ENCODE measurements at regions of chr9 and their contacts with region 1.

Region 1: DNA sequence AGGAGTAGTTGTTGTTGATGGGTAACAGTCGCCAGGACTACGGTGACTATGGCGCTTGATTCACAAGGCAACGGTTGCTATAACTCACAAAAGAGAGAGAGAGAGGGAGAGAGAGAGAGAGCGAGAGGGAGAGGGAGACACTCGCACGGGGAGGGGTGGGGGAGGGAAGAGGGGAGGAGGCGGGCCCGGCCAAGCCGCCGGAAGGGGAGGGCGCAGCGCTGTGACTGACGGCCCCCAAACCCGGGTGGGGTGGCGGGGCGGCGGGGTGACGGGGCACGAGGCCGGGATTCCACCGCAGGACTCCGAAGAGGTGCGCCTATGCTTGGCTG is at the start of gene RFX3:
- DNase-seq: peak in 8 of 9 donors; percentile 87 to 97 (median 92)
- ATAC-seq: peak; percentile 81
- H3K4me3 ChIP-seq: peak within 1 kb of the TSS; percentile 97
- H3K4me3 Mint-ChIP-seq: peak within 1 kb of the TSS; percentile 90 to 99 (median 94)
- H3K27ac ChIP-seq: peak within 1 kb of the TSS; percentile 100
- H3K27ac Mint-ChIP-seq: peak within 1 kb of the TSS; percentile 95 to 100 (median 99)
- H3K4me1 ChIP-seq: peaks cover 28 to 44% of the 10 kb centered on the region in 2 donors
- H3K4me1 Mint-ChIP-seq: peaks cover 32 to 74% (median 67%) of the 10 kb centered on the region in 7 donors
- H3K27me3 ChIP-seq: no peaks in the 10 kb centered on the region
- H3K27me3 Mint-ChIP-seq: peaks cover 0 to 5% (median 0%) of the 10 kb centered on the region in 5 donors
- total RNA-seq, gene RFX3: 12.8 to 31.7 (median 28.4) TPM

Region 2: GRCh38 chr9:2014696-2015580 is 1510.9 kb before region 1 on chr9 and contains the start of gene SMARCA2:
- CTCF ChIA-PET with region 1: no interaction called
- POLR2A ChIA-PET with region 1: interaction called, 4 read pairs
- intact Hi-C with region 1: loop called (anchors 1 to 2 kb)
- DNase-seq: peak; percentile 96 to 98 (median 97)
- ATAC-seq: peak; percentile 90
- H3K4me3 ChIP-seq: peak within 1 kb of the TSS; percentile 98
- H3K4me3 Mint-ChIP-seq: peak within 1 kb of the TSS; percentile 93 to 100 (median 98)
- H3K27ac ChIP-seq: peak within 1 kb of the TSS; percentile 92
- H3K27ac Mint-ChIP-seq: peak within 1 kb of the TSS; percentile 97 to 100 (median 99)
- H3K4me1 ChIP-seq: peaks cover 16 to 18% of the 10 kb centered on the region in 2 donors
- H3K4me1 Mint-ChIP-seq: peaks cover 21 to 60% (median 32%) of the 10 kb centered on the region in 7 donors
- H3K27me3 ChIP-seq: no peaks in the 10 kb centered on the region
- H3K27me3 Mint-ChIP-seq: peaks cover 0 to 24% (median 0%) of the 10 kb centered on the region in 5 donors
- total RNA-seq, gene SMARCA2: 233 to 294 (median 258) TPM

Region 3: DNA sequence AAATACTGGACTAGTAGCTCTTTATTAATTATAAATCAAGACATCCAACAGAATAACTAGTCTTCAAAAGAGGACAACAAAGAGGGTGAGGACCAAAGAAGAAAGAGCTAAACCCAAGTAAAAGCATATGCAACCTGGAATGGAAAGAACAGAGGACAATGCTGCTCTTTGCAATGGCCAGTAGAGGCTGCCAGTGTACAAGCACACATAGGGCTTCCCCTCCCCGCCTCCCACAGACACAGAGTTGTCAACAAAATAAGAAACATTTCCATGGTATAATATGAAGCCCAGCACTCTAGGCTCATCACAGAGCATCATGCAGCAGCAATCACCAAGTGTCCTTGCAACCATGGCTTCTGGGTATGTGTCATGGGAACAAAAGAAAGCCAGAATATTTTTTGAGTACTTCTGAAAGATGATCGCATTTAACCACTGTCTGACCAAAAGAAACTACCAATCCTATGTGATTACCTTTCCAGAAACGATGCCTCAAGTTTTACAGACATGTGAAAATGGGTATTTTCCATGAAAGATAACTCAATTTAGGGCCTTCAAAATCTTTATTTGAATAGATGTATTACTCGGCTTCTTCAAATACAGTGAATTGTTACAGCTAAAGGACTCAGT is 58.1 kb before region 1 on chr9:
- CTCF ChIA-PET with region 1: interaction called, 3 read pairs
- POLR2A ChIA-PET with region 1: interaction called, 17 read pairs
- intact Hi-C with region 1: loop called (anchors 1 kb)
- DNase-seq: peak; percentile 13 to 72 (median 53)
- ATAC-seq: peak; percentile 98
- H3K4me3 ChIP-seq: no peak overlapping the region
- H3K4me3 Mint-ChIP-seq: peak overlapping the region in 1 of 10 donors; percentile 39
- H3K27ac ChIP-seq: no peak overlapping the region
- H3K27ac Mint-ChIP-seq: peak overlapping the region in 3 of 9 donors; percentile 40 to 65 (median 53)
- H3K4me1 ChIP-seq: peaks cover 3 to 4% of the 10 kb centered on the region in 2 donors
- H3K4me1 Mint-ChIP-seq: peaks cover 3 to 25% (median 4%) of the 10 kb centered on the region in 7 donors
- H3K27me3 ChIP-seq: no peaks in the 10 kb centered on the region
- H3K27me3 Mint-ChIP-seq: no peaks in the 10 kb centered on the region

Region 4: DNA sequence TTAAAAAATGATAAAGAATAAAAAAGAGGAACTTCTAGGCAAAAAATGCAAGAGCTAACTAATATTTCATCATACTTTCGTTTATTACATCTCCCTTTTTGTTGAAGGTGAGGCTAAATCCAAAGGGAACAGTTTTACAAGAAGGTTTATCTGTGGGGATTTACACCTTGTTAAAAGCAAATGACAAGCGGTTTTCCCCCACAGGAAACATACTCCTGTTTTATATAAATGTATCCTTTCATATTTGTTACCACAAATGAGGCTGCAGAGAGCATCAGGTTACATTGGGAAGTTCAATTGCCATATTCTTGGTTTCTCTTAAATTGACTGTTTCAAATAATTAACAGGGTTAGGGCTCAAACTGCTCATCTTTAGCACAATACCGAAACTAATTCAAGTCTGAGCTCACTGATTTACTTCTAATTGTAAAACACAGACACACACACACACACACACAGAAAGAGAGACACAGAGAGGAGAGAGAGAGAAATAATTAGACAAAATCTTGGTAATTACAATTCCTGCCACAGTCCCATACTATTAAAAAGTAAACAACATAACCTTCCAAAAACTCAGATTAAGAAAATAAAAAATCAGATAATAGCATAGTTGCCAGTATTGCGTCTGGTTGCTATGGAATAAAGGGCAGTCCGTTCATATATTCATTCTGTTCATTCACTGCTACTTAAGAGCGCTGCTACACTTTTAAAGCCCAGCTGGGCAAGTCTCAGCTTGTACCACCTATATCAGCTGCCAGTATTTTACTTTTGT is 17.1 kb before region 1 on chr9:
- CTCF ChIA-PET with region 1: no interaction called
- POLR2A ChIA-PET with region 1: interaction called, 9 read pairs
- intact Hi-C with region 1: loop called (anchors 1 to 2 kb)
- DNase-seq: no peak
- ATAC-seq: no peak
- H3K4me3 ChIP-seq: no peak overlapping the region
- H3K4me3 Mint-ChIP-seq: peak overlapping the region in 8 of 10 donors; percentile 6 to 66 (median 38)
- H3K27ac ChIP-seq: no peak overlapping the region
- H3K27ac Mint-ChIP-seq: peak overlapping the region in 5 of 9 donors; percentile 24 to 83 (median 76)
- H3K4me1 ChIP-seq: peaks cover 0 to 12% of the 10 kb centered on the region in 2 donors
- H3K4me1 Mint-ChIP-seq: peaks cover 23 to 62% (median 41%) of the 10 kb centered on the region in 7 donors
- H3K27me3 ChIP-seq: no peaks in the 10 kb centered on the region
- H3K27me3 Mint-ChIP-seq: no peaks in the 10 kb centered on the region

Region 5: DNA sequence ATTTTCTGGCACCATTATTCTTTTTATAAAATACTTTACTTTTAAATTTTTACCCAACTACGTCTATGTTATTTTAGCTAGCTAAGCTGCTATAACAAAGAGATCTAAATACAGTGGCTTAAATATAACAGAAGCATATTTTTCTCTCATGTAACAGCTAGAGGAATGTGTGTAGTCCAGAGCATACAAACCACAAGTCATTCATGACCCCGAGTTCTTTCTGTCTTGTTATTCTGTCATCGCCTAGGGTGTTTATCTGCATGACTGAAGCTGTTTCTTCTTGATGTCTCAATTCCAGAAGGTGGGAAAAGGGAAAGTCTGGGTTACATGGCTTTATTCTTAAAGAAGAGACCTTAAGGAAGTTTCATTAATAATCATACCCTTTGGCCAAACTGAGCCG is 136.9 kb after region 1 on chr9:
- CTCF ChIA-PET with region 1: no interaction called
- POLR2A ChIA-PET with region 1: no interaction called
- intact Hi-C with region 1: no loop called
- DNase-seq: no peak
- ATAC-seq: no peak
- H3K4me3 ChIP-seq: no peak overlapping the region
- H3K4me3 Mint-ChIP-seq: no peak overlapping the region
- H3K27ac ChIP-seq: no peak overlapping the region
- H3K27ac Mint-ChIP-seq: no peak overlapping the region
- H3K4me1 ChIP-seq: no peaks in the 10 kb centered on the region
- H3K4me1 Mint-ChIP-seq: no peaks in the 10 kb centered on the region
- H3K27me3 ChIP-seq: no peaks in the 10 kb centered on the region
- H3K27me3 Mint-ChIP-seq: peaks cover 0 to 3% (median 0%) of the 10 kb centered on the region in 5 donors

Region 6: DNA sequence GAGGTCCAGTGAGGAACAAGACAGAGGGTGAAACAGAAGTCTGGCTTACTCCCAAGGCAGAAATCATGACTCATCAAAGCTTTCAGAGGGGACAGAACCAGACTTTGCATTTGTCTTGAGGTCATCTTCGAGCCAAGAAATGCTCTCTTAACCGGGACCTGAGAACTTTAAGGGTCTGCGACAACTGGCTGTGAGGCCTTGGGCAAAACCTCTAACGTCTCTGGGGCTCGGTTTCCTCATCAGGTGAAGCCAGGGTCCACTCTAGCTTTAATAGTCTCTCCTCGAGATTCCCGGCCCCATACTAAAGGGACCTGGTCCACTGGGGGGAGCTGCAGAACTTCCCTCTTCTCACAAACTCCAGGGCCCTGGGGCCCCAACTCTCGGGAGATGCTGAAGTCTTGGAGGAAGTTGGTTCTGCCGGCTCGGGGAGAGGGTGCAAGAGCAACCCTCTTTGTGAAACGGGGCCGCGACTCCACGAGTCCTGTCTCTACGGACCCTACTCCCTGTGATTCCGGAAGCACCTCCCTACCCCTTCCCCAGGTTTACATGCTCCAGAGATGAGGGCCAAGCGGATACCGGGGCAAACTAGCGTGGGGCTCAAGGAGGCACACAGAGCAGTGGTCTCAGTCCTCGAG is 771.5 kb after region 1 on chr9:
- CTCF ChIA-PET with region 1: interaction called, 5 read pairs
- POLR2A ChIA-PET with region 1: interaction called, 17 read pairs
- intact Hi-C with region 1: loop called (anchors 1 to 5 kb)
- DNase-seq: peak; percentile 12 to 47 (median 29)
- ATAC-seq: peak; percentile 55
- H3K4me3 ChIP-seq: peak overlapping the region; percentile 74
- H3K4me3 Mint-ChIP-seq: peak overlapping the region; percentile 93 to 98 (median 96)
- H3K27ac ChIP-seq: peak overlapping the region; percentile 68
- H3K27ac Mint-ChIP-seq: peak overlapping the region; percentile 80 to 97 (median 88)
- H3K4me1 ChIP-seq: peaks cover 0 to 4% of the 10 kb centered on the region in 2 donors
- H3K4me1 Mint-ChIP-seq: peaks cover 15 to 34% (median 21%) of the 10 kb centered on the region in 7 donors
- H3K27me3 ChIP-seq: no peaks in the 10 kb centered on the region
- H3K27me3 Mint-ChIP-seq: peaks cover 0 to 67% (median 28%) of the 10 kb centered on the region in 5 donors

Region 7: DNA sequence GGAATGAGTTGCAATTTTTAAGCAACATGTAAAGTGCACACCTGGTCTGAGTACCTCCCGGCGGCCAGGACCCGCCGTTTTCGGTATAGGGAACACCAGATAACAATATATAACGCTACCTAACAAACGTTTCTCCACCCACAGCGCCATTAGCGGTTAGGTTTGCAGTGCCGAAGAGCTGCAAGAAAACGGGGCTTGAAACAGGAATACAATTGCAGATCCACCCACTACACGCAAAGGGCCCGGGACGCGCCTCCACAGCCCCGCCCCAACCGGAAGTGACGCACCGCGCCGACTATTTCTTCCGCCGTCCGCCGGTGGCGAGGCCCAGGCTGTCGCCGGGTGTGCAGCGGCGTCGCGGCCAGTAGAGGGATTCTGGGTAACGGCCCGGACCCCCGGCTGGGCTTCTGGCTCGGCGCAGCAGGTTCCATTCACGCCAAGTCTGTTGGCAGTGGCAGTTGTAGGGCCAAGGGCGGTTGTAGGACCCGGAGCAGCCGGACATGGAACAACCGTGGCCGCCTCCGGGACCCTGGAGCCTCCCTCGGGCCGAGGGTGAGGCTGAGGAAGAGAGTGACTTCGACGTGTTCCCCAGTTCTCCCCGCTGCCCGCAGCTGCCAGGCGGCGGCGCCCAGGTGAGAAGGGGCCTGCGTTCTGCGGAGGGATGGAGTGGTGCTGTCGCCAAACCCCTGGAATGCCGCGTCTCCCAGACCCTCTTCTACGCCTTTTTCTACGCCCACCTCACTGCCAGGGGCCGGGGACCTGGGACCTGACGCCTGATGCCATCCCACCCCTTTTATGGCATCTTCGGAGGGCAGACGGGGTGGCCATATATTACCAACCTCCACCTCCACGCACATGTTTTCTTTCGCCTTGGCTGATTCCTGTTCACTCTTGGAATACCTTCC is 1153.7 kb after region 1 on chr9 and contains the start of gene CDC37L1:
- CTCF ChIA-PET with region 1: no interaction called
- POLR2A ChIA-PET with region 1: interaction called, 6 read pairs
- intact Hi-C with region 1: loop called (anchors 1 kb)
- DNase-seq: peak; percentile 98 to 100 (median 99)
- ATAC-seq: peak; percentile 98
- H3K4me3 ChIP-seq: peak within 1 kb of the TSS; percentile 72
- H3K4me3 Mint-ChIP-seq: no peak within 1 kb of the TSS
- H3K27ac ChIP-seq: peak within 1 kb of the TSS; percentile 95
- H3K27ac Mint-ChIP-seq: no peak within 1 kb of the TSS
- H3K4me1 ChIP-seq: peaks cover 15 to 19% of the 10 kb centered on the region in 2 donors
- H3K4me1 Mint-ChIP-seq: peaks cover 9 to 19% (median 17%) of the 10 kb centered on the region in 7 donors
- H3K27me3 ChIP-seq: no peaks in the 10 kb centered on the region
- H3K27me3 Mint-ChIP-seq: no peaks in the 10 kb centered on the region
- total RNA-seq, gene CDC37L1: 13.4 to 28.0 (median 22.9) TPM

Region 8: DNA sequence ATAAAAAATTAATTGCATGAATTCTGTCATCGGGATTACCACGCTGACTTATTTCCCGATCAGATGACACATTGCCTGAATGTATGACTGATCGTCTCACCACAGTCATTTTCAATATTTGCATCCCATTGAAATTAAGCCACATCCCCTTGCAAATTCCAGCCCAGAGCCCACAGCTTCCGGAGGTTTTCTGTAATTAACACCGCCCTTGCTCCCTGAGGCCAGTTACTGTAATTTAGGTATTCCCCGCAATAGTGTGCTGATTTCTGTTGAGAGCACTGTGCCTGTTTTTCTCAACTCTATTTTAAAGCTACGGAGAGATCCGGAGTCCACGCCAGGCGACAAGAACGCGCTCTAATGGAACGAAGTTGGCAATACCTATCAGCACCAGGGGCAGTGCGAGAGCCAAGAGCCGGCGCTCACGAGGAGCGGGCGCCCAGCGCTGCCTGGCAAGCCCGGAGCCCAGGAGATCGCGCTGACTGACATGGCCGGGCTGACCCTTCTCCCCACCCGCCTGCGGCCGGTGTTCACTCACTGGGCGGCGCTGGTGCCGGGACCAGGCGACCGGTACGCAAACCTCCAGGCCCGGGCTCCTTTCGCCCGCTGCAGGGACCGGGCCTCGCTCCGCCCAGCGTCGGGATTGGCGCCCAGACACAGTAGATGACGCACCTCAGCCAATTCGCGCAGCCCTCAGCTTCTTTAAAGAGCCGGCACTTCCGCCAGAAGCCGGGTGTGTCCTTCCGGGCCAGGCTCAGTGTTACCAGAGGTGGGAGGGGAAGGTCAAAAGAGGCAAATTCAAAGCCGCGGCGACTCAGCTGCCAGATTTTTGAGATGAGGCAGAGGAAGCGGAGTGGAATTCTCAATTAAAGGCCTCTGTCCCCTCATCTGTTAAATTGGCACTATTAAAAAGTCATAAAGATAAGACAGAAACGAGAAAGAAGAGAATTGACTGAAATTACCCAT is 1911.7 kb after region 1 on chr9 and contains the start of gene PLGRKT:
- CTCF ChIA-PET with region 1: no interaction called
- POLR2A ChIA-PET with region 1: interaction called, 5 read pairs
- intact Hi-C with region 1: loop called (anchors 5 kb)
- DNase-seq: peak; percentile 77 to 91 (median 89)
- ATAC-seq: peak; percentile 96
- H3K4me3 ChIP-seq: peak within 1 kb of the TSS; percentile 84
- H3K4me3 Mint-ChIP-seq: peak within 1 kb of the TSS; percentile 86 to 98 (median 96)
- H3K27ac ChIP-seq: peak within 1 kb of the TSS; percentile 81
- H3K27ac Mint-ChIP-seq: peak within 1 kb of the TSS; percentile 90 to 100 (median 98)
- H3K4me1 ChIP-seq: peaks cover 18 to 19% of the 10 kb centered on the region in 2 donors
- H3K4me1 Mint-ChIP-seq: peaks cover 7 to 50% (median 36%) of the 10 kb centered on the region in 7 donors
- H3K27me3 ChIP-seq: no peaks in the 10 kb centered on the region
- H3K27me3 Mint-ChIP-seq: no peaks in the 10 kb centered on the region
- total RNA-seq, gene PLGRKT: 15.8 to 31.7 (median 16.8) TPM

Measured in naive thymus-derived CD4-positive, alpha-beta T cell (primary cell).